ENCODE measurements at regions of chr10 and their contacts with region 1.

Region 1: GRCh38 chr10:21495752-21496342 is 29.6 kb downstream of the SKIDA1 start:
- DNase-seq: no peak
- H3K4me3 ChIP-seq: peak overlapping the region; percentile 85
- CTCF ChIP-seq: peak; percentile 89

Region 2: GRCh38 chr10:21278491-21279239 is 217.2 kb before region 1 on chr10:
- CTCF ChIA-PET with region 1: interaction called, 125 read pairs
- POLR2A ChIA-PET with region 1: interaction called, 3 read pairs
- DNase-seq: peak; percentile 69
- H3K4me3 ChIP-seq: no peak overlapping the region
- CTCF ChIP-seq: peak; percentile 87

Region 3: DNA sequence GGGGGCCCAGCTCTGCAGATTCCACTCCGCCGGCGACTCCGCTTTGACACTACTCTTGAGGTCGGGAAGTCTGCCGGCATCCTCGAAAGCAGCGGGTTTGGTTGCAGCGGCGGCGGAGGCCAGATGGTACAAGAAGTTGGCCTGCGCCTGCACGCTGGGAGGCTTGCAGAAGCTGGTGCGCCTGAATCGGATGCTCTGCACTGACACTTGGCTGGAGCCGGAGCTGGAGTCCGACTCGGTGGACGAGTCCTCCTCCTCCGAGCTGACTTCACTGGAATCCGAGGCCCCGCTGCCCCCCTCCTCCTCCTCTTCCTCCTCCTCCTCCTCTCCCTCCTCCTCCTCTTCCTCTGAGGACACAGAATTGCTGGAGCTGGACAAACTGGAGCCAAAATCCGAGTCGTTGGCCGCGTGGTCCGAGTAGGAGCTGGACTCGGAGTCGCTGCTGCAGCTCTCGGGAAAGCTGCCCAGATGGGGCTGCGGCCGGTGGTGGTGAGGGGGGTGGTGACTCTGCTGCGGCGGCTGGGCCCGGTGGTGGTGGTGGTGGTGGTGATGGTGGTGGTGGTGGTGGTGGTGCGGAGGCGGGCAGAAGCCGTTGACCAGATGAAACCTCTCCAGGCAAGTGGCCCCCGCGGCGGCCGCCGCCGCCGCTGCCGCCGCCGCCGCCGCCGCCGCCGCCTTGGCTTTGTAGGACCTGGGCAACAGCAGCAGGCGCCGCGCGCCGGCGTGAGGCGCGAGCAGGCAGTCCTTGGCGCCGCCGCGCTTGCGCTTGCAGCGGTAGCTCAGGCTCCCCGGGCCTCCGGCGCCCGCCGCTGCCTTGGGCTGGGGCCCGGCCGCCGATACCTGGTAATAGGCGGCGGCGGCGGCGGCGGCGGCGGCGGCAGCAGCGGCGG is 20.6 kb after region 1 on chr10:
- CTCF ChIA-PET with region 1: interaction called, 51 read pairs
- POLR2A ChIA-PET with region 1: interaction called, 4 read pairs
- DNase-seq: no peak
- H3K4me3 ChIP-seq: peak overlapping the region; percentile 65
- CTCF ChIP-seq: no peak

Region 4: DNA sequence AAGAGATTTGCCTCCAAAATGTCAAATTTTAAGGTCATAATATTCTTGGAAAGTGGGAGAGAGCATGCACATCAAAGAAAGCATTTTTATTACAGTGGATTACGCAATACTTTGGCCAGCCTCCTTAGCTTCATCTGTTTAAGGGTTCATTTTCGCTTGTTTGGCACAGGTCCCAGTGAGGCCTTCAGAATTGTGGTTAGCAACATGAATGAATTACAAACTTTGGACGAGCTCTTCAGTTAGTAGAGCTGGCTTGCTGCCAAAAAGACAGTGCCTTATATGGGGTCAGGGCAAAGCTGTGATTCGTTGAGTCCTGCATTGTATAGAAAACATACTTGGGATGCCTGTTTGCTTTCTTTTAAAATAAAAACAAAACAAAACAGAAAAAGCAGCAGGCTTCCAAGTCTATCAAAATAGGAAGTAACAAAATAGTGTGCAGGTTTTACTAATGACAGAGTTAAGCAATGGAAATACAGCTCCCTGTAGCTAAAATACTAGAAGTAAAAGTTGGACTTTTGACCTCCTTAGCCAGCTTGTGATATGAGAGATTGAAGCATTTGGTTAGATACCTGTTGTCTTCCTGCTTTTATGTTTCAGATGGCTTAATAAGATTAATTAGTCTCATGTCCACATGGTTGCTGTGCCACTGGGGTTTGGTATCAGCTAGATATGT is 229.0 kb after region 1 on chr10:
- CTCF ChIA-PET with region 1: interaction called, 16 read pairs
- POLR2A ChIA-PET with region 1: no interaction called
- DNase-seq: peak; percentile 99
- H3K4me3 ChIP-seq: no peak overlapping the region
- CTCF ChIP-seq: no peak

Region 5: GRCh38 chr10:21953585-21954057 is 457.8 kb after region 1 on chr10:
- CTCF ChIA-PET with region 1: interaction called, 12 read pairs
- POLR2A ChIA-PET with region 1: no interaction called
- DNase-seq: peak; percentile 1
- H3K4me3 ChIP-seq: no peak overlapping the region
- CTCF ChIP-seq: peak; percentile 8

Measured in AG04449 (cell line).